Activated CD8-positive, alpha-beta T cell treated with anti-CD3 and anti-CD28 coated beads, Interleukin-2, amount 10 ng/mL, durations not matched to agents 7 days and 5 days (primary cell): ENCODE measurements at regions of chr6 and their contacts with region 1.

Region 1: DNA sequence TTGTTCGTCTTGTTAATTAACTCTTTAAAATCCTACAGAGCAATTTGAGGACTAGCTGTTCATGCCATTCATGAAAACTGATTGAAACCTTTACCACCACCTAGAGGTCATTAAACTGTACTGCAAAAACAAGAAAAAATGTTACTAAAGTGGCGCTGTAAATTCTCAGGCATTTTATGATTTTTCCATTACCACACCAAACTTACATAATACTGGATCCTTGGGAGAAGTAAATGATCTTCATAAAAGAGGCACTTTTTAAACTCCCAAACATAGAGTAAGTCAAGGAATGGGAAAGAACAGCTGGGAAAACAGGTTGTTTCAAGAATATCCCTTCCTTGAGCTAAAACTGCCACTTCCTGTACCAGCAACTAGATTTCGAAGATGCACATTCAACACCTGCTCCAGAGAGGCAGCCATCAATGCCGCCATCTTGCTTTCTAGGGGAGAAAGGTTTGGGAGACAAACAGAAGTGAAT is 54.3 kb downstream of the MYLIP start:
- DNase-seq: no peak
- ATAC-seq: no peak
- H3K4me3 Mint-ChIP-seq: no peak overlapping the region
- H3K27ac Mint-ChIP-seq: no peak overlapping the region
- H3K4me1 Mint-ChIP-seq: peaks cover 36% of the 10 kb centered on the region
- H3K27me3 Mint-ChIP-seq: peaks cover 19% of the 10 kb centered on the region

Region 2: DNA sequence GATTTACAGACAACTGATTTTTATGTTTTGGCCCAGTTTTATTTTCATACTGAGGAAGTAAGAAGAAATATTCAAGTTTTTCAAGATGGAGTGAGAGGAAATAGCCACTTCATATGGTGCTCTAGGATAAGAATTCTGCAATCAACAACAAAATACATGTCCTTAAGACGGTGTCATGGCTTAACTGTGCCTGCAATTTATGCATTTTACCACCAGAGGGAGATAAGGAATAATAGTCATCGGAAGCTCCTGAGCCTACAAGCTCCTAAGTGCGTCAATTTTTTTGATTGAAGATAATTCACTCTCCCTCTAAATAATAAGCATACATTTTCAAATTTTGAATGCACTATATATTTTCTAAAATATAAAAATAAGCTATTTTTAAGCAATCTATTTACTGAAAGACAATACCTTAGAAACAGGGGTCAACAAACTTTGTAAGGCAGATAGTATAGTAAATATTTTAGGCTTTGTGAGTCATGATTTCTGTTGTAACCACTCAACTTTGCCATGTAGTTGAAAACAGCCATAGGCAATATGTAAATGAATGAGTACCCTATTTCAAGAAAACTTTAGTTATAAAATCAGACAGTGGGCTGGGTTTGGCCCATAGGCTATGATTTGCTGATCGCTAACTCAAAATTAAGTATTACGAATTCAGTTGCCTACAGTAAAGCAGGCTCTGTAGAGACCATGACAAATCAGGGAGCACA is 289.5 kb before region 1 on chr6:
- CTCF ChIA-PET with region 1: interaction called, 22 read pairs
- POLR2A ChIA-PET with region 1: no interaction called
- DNase-seq: no peak
- ATAC-seq: no peak
- H3K4me3 Mint-ChIP-seq: no peak overlapping the region
- H3K27ac Mint-ChIP-seq: no peak overlapping the region
- H3K4me1 Mint-ChIP-seq: no peaks in the 10 kb centered on the region
- H3K27me3 Mint-ChIP-seq: no peaks in the 10 kb centered on the region

Region 3: DNA sequence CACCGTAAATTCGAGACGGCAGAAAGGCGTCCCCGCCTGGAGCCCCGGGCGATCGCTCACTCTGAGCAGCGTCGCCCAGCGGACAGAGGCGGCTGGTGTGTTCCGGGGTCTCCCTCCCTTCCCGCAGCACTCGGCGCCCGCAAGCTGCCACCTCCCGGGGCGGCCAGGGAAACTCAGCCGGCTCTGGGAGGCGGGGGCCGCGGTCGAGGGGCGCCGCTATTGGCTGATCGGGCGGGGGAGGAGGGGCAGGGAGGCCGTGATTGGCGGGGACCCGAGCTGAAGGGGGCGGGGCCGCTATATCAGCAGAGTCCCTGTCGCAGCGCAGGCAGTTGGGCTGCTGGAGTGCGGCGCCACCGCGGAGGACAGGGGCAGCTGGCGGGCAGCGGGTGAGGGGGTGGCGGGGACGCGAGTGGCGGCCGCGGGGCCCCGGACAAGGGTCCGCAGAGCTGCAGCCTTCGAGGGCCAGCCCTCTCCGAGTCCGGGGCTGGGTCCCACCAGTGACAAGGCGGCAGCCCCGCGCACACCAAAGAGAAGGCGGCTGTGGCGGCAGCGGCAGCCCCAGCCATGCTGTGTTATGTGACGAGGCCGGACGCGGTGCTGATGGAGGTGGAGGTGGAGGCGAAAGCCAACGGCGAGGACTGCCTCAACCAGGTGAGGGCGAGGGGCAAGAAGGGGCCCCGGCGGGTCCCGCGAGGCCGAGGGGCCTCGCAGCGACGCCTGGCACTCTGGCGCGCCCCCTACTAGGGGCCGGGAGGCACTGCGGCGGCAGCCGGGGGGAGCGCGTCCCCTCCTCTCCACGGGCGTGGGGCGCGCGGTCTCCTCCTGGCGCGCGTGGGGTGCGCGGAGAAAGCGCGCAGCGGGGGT is 54.2 kb before region 1 on chr6 and contains the start of gene MYLIP:
- CTCF ChIA-PET with region 1: interaction called, 77 read pairs
- POLR2A ChIA-PET with region 1: interaction called, 61 read pairs
- DNase-seq: peak; percentile 97
- ATAC-seq: peak; percentile 84
- H3K4me3 Mint-ChIP-seq: peak within 1 kb of the TSS; percentile 88
- H3K27ac Mint-ChIP-seq: peak within 1 kb of the TSS; percentile 93
- H3K4me1 Mint-ChIP-seq: peaks cover 35% of the 10 kb centered on the region
- H3K27me3 Mint-ChIP-seq: peaks cover 19% of the 10 kb centered on the region
- total RNA-seq, gene MYLIP: 17.3 to 17.6 TPM

Region 4: DNA sequence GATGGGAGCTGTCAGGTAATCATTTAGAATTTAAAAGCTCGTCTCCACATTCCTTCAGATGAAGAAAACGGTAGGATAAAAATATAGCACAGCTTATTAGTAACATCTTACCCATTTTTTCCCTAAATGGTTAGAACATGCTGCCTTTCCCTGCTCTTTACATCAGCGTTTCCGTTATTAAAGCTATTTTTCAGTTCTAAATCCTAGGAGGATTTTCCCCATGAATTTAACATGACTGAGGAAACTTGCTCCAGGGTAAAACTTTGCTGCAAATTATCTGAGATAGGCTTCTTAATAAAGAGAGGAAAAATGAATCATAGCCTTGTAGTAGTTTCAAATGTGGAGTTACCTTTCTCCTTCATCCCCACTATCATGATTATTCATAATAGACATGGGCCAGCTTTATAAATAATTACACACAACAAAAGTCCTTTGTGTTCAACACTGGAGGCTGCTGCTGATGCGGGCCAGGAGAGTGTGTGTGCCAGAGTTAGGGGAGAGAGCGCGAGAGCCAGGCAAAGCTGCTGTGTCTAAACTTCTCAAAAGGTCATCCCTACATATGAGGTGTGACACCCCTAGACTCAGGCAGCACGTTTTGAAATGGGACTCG is 29.9 kb before region 1 on chr6:
- CTCF ChIA-PET with region 1: interaction called, 11 read pairs
- POLR2A ChIA-PET with region 1: no interaction called
- DNase-seq: no peak
- ATAC-seq: no peak
- H3K4me3 Mint-ChIP-seq: no peak overlapping the region
- H3K27ac Mint-ChIP-seq: no peak overlapping the region
- H3K4me1 Mint-ChIP-seq: peaks cover 1% of the 10 kb centered on the region
- H3K27me3 Mint-ChIP-seq: no peaks in the 10 kb centered on the region

Region 5: DNA sequence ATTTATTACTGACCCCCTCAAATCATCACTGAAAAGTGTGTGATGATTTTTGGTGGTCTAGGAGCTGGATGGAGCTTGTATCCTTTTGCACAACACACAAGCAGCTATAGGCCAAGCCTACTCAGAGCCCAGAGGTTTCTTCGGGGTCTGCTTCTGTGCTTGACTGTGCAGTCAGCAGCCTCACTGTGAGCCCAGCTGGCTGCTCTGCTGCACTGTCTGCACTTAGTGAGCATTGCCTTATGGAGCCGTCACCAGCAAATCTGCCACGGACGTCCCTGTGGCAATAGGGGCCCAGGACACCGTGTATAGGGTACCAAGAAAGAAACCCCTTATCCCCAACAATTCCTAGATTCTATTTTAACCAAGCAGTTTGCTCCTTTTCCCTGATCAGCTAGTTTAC is 16.6 kb after region 1 on chr6:
- CTCF ChIA-PET with region 1: interaction called, 43 read pairs
- POLR2A ChIA-PET with region 1: no interaction called
- DNase-seq: no peak
- ATAC-seq: no peak
- H3K4me3 Mint-ChIP-seq: no peak overlapping the region
- H3K27ac Mint-ChIP-seq: no peak overlapping the region
- H3K4me1 Mint-ChIP-seq: no peaks in the 10 kb centered on the region
- H3K27me3 Mint-ChIP-seq: peaks cover 9% of the 10 kb centered on the region

Region 6: GRCh38 chr6:17892097-17892686 is 1709.0 kb after region 1 on chr6:
- CTCF ChIA-PET with region 1: no interaction called
- POLR2A ChIA-PET with region 1: no interaction called
- DNase-seq: no peak
- ATAC-seq: no peak
- H3K4me3 Mint-ChIP-seq: no peak overlapping the region
- H3K27ac Mint-ChIP-seq: no peak overlapping the region
- H3K4me1 Mint-ChIP-seq: no peaks in the 10 kb centered on the region
- H3K27me3 Mint-ChIP-seq: peaks cover 12% of the 10 kb centered on the region